GM12878 (cell line): ENCODE measurements at regions of chr2 and their contacts with region 1.

Region 1: GRCh38 chr2:165182029-165182428 is 21.8 kb downstream of the SCN3A start:
- DNase-seq: no peak
- ATAC-seq: no peak
- H3K4me3 ChIP-seq: no peak overlapping the region
- H3K27ac ChIP-seq: no peak overlapping the region
- H3K4me1 ChIP-seq: no peaks in the 10 kb centered on the region
- H3K27me3 ChIP-seq: no peaks in the 10 kb centered on the region
- CTCF ChIP-seq: no peak
- EP300 ChIP-seq: no peak
- POLR2A ChIP-seq: no peak
- RAD21 ChIP-seq: no peak

Region 2: DNA sequence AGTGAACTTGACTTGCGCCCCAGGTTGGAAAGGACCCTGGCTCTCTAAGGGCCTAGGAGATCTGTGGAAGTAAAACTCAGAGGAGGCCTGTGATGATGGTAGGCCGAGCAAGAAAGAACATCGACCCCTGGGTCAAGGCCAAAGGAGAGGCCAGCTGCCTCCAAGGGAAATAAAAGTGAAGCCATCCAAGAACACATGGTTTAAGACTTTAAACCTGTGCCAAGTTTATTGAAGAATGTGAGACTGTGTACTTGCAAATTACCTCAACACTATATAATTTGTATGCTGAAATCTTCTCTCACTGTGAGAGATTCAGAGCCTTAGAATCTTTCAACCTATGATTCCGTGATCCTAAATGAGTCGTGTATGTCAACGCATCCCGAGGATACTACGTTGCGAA is 299.8 kb before region 1 on chr2:
- CTCF ChIA-PET with region 1: no interaction called
- POLR2A ChIA-PET with region 1: no interaction called
- RAD21 ChIA-PET with region 1: no interaction called
- SMC1A ChIA-PET with region 1: no interaction called
- in situ Hi-C with region 1: no loop called
- intact Hi-C with region 1: no loop called
- DNase-seq: no peak
- ATAC-seq: no peak
- H3K4me3 ChIP-seq: no peak overlapping the region
- H3K27ac ChIP-seq: no peak overlapping the region
- H3K4me1 ChIP-seq: no peaks in the 10 kb centered on the region
- H3K27me3 ChIP-seq: no peaks in the 10 kb centered on the region; a peak in 1 of 4 replicates
- CTCF ChIP-seq: no peak
- EP300 ChIP-seq: no peak
- POLR2A ChIP-seq: no peak
- RAD21 ChIP-seq: no peak

Region 3: GRCh38 chr2:165003433-165004130 is 178.4 kb before region 1 on chr2:
- CTCF ChIA-PET with region 1: no interaction called
- POLR2A ChIA-PET with region 1: no interaction called
- RAD21 ChIA-PET with region 1: no interaction called
- SMC1A ChIA-PET with region 1: no interaction called
- in situ Hi-C with region 1: loop called (anchors 5 kb)
- intact Hi-C with region 1: no loop called
- DNase-seq: no peak
- ATAC-seq: no peak
- H3K4me3 ChIP-seq: no peak overlapping the region
- H3K27ac ChIP-seq: no peak overlapping the region
- H3K4me1 ChIP-seq: no peaks in the 10 kb centered on the region
- H3K27me3 ChIP-seq: 0 out of 4 replicates have a peak, but pooled peaks cover 0 to 3% of the 10 kb centered on the region in 2 experiments
- CTCF ChIP-seq: no peak
- EP300 ChIP-seq: no peak
- POLR2A ChIP-seq: no peak
- RAD21 ChIP-seq: no peak

Region 4: DNA sequence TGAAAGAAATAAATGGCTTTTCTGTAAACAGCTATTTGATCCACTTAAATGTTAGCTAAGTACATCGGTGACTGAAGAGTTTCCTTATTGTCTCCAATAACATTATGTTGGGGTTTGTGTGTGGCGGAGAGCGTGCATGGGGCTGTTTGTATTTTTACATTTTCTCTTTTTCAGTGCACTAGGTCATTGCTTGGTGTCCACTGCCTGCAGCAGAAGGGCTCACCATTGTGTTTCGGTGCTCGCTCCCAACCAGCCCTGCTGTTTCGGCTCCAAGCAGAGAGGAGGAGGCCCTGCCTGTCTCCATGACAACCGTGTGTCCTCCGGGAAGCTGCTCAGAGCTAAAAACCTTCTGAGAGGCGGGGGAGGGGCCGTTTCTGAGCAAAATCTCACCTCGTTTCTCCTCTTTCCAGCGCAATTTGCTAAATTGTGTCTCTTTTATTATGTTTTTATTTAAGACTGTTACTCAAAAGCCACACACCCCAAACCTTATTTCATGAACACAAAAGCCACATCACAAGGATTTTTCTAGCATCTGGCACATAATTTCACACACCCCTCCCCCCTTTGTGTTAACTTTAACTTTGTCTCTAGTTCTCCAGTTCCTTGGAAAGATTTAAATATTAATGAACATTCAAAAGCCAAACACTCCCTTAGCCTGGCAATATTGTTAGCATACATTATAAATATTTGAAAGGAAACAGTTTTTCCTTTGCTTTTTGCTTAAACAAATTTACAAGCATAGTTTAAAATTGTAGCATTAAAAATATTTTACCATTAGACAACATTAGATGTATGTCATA is 113.9 kb before region 1 on chr2:
- CTCF ChIA-PET with region 1: no interaction called
- POLR2A ChIA-PET with region 1: no interaction called
- RAD21 ChIA-PET with region 1: no interaction called
- SMC1A ChIA-PET with region 1: no interaction called
- in situ Hi-C with region 1: no loop called
- intact Hi-C with region 1: no loop called
- DNase-seq: no peak
- ATAC-seq: no peak
- H3K4me3 ChIP-seq: no peak overlapping the region
- H3K27ac ChIP-seq: no peak overlapping the region
- H3K4me1 ChIP-seq: no peaks in the 10 kb centered on the region
- H3K27me3 ChIP-seq: no peaks in the 10 kb centered on the region
- CTCF ChIP-seq: no peak
- EP300 ChIP-seq: no peak
- POLR2A ChIP-seq: no peak
- RAD21 ChIP-seq: no peak